Sciatic nerve (tissue), 2 donors: ENCODE measurements at regions of chr17 and their contacts with region 1.

Region 1: DNA sequence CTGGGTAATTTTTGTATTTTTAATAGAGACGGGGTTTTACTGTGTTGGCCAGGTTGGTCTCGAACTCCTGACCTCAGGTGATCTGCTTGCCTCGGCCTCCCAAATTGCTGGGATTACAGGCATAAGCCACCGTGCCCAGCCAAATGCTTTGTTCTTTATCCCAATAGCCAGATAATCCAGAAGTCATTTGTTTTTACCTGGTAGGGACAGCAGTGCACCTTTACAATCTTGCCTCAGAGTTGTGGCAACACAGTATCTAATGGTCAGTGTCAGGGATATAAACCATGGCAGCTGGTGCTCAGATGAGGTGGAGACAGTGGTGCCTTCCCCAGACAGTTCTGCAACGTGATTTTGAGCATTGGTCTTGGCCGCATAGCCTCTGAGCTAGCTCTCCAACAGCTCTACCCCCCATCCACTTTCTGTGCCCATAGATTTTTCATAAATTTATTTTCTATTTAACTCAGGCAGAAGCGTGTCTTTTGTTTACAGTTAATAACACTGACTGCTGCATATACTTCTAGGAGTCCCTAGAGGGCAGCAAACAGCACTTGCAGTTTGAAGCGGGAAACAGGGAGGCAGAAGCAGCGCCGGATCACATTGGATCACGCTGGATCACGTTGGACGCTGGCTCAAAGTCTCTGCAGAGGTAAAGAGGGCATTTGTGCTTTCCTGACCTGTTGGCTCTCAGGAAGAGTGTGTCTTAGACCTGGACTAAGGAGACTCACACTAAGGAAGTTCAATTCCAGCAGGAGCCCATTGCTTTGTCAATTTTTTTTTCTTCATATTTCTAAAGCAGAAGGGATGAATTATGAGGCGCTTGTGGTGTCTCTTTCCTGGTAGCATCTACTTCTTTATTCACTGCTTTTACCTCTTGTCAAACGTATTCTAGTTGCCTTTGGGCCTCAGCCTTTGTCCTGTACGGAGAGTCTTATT is 5.1 kb upstream of the GGT6 start:
- DNase-seq: no peak
- ATAC-seq: peak; percentile 85

Region 2: DNA sequence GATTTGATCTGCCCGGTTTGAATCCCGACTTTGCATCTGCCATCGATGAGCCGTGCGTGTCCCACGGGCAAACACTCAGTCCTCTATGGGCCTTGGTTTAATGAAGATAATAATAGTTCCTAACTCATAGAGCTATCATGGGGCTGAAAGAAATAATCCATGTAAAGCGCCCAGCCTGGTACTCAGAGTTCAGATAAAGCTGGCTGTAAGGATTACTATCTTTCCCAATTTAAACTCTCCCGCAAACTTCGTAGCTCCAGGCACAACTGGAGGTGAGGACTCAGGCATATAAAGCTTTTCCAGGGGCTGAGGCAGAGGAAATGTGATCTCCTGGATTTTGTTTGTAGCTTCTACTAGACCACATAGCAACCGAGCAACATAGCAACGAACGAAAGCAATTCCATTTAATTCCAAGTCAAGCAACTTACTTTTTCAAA is 59.7 kb after region 1 on chr17:
- intact Hi-C with region 1: loop called (anchors 10 kb)
- DNase-seq: no peak
- ATAC-seq: peak; percentile 39